Heart right ventricle (tissue), 16 donors: ENCODE measurements at regions of chr18 and their contacts with region 1.

Region 1: GRCh38 chr18:7370802-7371201 is 139.9 kb downstream of the LRRC30 start:
- DNase-seq: peak; percentile 76 to 89
- ATAC-seq: peak; percentile 82 to 95 (median 91)
- H3K4me3 ChIP-seq: peak overlapping the region in 2 of 10 donors; percentile 7 to 29
- H3K27ac ChIP-seq: peak overlapping the region; percentile 53 to 94 (median 88)
- H3K4me1 ChIP-seq: peaks cover 16 to 81% (median 45%) of the 10 kb centered on the region in 9 donors
- H3K27me3 ChIP-seq: no peaks in the 10 kb centered on the region
- CTCF ChIP-seq: no peak

Region 2: DNA sequence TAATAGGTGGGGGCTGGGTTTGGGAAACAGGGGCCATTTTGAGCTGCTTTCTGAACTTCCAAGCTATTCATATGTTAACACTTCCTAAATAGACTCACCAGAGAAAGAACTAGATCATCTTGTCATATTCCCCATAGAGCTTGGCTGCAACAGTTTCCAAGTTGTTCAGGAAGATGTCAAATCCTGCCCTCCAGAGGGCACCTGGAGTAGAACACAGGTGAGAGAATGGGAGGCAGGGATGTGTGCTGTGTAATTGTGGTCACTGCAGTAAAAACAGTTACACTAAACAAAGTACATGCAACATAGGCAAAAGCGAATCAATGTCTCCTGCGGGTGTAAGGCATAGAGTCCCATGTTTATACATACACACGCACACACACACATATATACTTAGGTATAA is 174.4 kb before region 1 on chr18:
- intact Hi-C with region 1: no loop called
- DNase-seq: no peak
- ATAC-seq: no peak
- H3K4me3 ChIP-seq: no peak overlapping the region
- H3K27ac ChIP-seq: no peak overlapping the region
- H3K4me1 ChIP-seq: no peaks in the 10 kb centered on the region
- H3K27me3 ChIP-seq: peaks cover 0 to 4% (median 0%) of the 10 kb centered on the region in 7 donors
- CTCF ChIP-seq: no peak

Region 3: GRCh38 chr18:7234091-7234490 is 136.7 kb before region 1 on chr18:
- intact Hi-C with region 1: no loop called
- DNase-seq: peak; percentile 50 to 71
- ATAC-seq: peak; percentile 84 to 97 (median 94)
- H3K4me3 ChIP-seq: no peak overlapping the region
- H3K27ac ChIP-seq: peak overlapping the region in 8 of 10 donors; percentile 64 to 80 (median 75)
- H3K4me1 ChIP-seq: peaks cover 0 to 35% (median 12%) of the 10 kb centered on the region in 9 donors
- H3K27me3 ChIP-seq: peaks cover 0 to 3% (median 0%) of the 10 kb centered on the region in 7 donors
- CTCF ChIP-seq: no peak

Region 4: GRCh38 chr18:7291046-7291445 is 79.8 kb before region 1 on chr18:
- intact Hi-C with region 1: no loop called
- DNase-seq: no peak
- ATAC-seq: peak in 2 of 8 donors; percentile 23 to 74
- H3K4me3 ChIP-seq: no peak overlapping the region
- H3K27ac ChIP-seq: peak overlapping the region in 3 of 10 donors; percentile 2 to 30 (median 7)
- H3K4me1 ChIP-seq: peaks cover 0 to 36% (median 0%) of the 10 kb centered on the region in 9 donors
- H3K27me3 ChIP-seq: no peaks in the 10 kb centered on the region
- CTCF ChIP-seq: no peak

Region 5: GRCh38 chr18:7322817-7323485 is 47.9 kb before region 1 on chr18:
- intact Hi-C with region 1: loop called in 2 of 10 experiments (anchors 5 kb)
- DNase-seq: no peak
- ATAC-seq: no peak
- H3K4me3 ChIP-seq: no peak overlapping the region
- H3K27ac ChIP-seq: peak overlapping the region in 3 of 10 donors; percentile 41 to 70 (median 44)
- H3K4me1 ChIP-seq: peaks cover 0 to 37% (median 18%) of the 10 kb centered on the region in 9 donors
- H3K27me3 ChIP-seq: peaks cover 0 to 5% (median 0%) of the 10 kb centered on the region in 7 donors
- CTCF ChIP-seq: no peak

Region 6: DNA sequence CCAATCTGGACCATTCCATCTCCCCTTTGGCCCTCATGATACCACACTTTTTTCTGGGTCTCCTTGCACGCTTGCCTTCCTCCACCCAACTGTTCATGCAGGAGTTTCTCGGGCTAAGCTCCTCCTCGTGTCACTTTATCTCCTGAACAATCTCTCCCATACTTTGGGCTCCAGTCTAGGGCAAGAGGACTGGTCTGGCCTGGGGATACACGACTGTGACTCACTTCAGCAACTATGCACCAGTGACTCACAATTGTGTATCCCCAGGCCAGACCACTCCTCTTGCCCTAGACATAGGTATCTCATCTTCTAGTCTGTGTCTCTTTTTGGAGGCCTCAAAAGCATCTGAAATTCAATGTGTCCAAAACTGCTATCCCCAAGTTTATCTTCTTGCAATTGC is 46.9 kb after region 1 on chr18:
- intact Hi-C with region 1: loop called in 1 of 10 experiments (anchors 10 kb)
- DNase-seq: no peak
- ATAC-seq: no peak
- H3K4me3 ChIP-seq: no peak overlapping the region
- H3K27ac ChIP-seq: no peak overlapping the region
- H3K4me1 ChIP-seq: peaks cover 0 to 22% (median 9%) of the 10 kb centered on the region in 9 donors
- H3K27me3 ChIP-seq: no peaks in the 10 kb centered on the region
- CTCF ChIP-seq: no peak

Region 7: GRCh38 chr18:7452331-7452730 is 81.5 kb after region 1 on chr18:
- intact Hi-C with region 1: loop called in 1 of 10 experiments (anchors 5 kb)
- DNase-seq: peak; percentile 27 to 31
- ATAC-seq: peak in 7 of 8 donors; percentile 53 to 87 (median 71)
- H3K4me3 ChIP-seq: no peak overlapping the region
- H3K27ac ChIP-seq: no peak overlapping the region
- H3K4me1 ChIP-seq: peaks cover 0 to 17% (median 0%) of the 10 kb centered on the region in 9 donors
- H3K27me3 ChIP-seq: no peaks in the 10 kb centered on the region
- CTCF ChIP-seq: peak; percentile 45 to 74 (median 65)

Region 8: DNA sequence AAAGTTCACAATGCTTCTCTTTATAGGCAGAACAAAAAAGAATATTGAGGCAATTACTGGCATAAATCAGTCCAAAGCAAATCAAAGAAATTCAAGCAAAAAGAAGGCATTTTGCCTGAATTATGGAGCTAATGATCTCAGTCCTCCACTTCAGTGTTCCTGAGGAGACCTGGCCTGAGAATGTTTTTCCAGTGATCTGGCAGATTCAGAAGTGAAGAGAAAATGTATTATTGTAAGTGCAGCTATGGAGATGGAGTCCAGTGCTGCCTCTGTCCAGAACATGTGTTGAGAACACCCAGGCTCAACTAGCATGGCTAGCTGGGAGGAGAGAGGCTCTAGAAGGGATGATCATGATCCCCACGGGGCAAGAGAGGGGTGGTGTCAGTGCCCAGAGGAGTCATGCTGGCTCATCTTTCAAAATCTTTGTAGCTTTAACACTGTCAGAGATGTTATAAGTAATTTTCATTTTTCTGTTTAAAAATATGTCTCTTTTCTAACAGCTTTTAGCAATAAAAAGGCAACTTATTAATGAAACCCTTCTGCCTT is 871.4 kb after region 1 on chr18:
- intact Hi-C with region 1: loop called in 1 of 10 experiments (anchors 5 kb)
- DNase-seq: no peak
- ATAC-seq: no peak
- H3K4me3 ChIP-seq: no peak overlapping the region
- H3K27ac ChIP-seq: no peak overlapping the region
- H3K4me1 ChIP-seq: peaks cover 0 to 12% (median 0%) of the 10 kb centered on the region in 9 donors
- H3K27me3 ChIP-seq: no peaks in the 10 kb centered on the region
- CTCF ChIP-seq: no peak